Endothelial cell of umbilical vein (primary cell): ENCODE measurements at regions of chr6 and their contacts with region 1.

Region 1: GRCh38 chr6:161273752-161274487 is at the start of gene AGPAT4:
- DNase-seq: peak; percentile 98
- H3K4me3 ChIP-seq: peak within 1 kb of the TSS; percentile 71 to 82 (median 72)
- H3K27ac ChIP-seq: peak within 1 kb of the TSS; percentile 87
- H3K4me1 ChIP-seq: peaks cover 16% of the 10 kb centered on the region
- H3K27me3 ChIP-seq: no peaks in the 10 kb centered on the region
- CTCF ChIP-seq: no peak
- POLR2A ChIP-seq: peak; percentile 63
- total RNA-seq, gene AGPAT4: 15.2 and 15.4 TPM in 2 replicates

Region 2: GRCh38 chr6:160679402-160679769 is 594.5 kb before region 1 on chr6:
- CTCF ChIA-PET with region 1: no interaction called
- POLR2A ChIA-PET with region 1: no interaction called
- dilution Hi-C with region 1: no loop called
- intact Hi-C with region 1: no loop called
- DNase-seq: no peak
- H3K4me3 ChIP-seq: no peak overlapping the region
- H3K27ac ChIP-seq: no peak overlapping the region
- H3K4me1 ChIP-seq: no peaks in the 10 kb centered on the region
- H3K27me3 ChIP-seq: no peaks in the 10 kb centered on the region
- CTCF ChIP-seq: no peak
- POLR2A ChIP-seq: no peak

Region 3: GRCh38 chr6:160930547-160931377 is 343.2 kb before region 1 on chr6:
- CTCF ChIA-PET with region 1: interaction called, 3 read pairs
- POLR2A ChIA-PET with region 1: no interaction called
- dilution Hi-C with region 1: no loop called
- intact Hi-C with region 1: loop called (anchors 10 kb)
- DNase-seq: peak; percentile 59
- H3K4me3 ChIP-seq: peak overlapping the region; percentile 22 to 39 (median 31)
- H3K27ac ChIP-seq: no peak overlapping the region
- H3K4me1 ChIP-seq: peaks cover 2% of the 10 kb centered on the region
- H3K27me3 ChIP-seq: peaks cover 0 to 3% of the 10 kb centered on the region in 2 experiments
- CTCF ChIP-seq: peak; percentile 87 to 94
- POLR2A ChIP-seq: no peak

Region 4: DNA sequence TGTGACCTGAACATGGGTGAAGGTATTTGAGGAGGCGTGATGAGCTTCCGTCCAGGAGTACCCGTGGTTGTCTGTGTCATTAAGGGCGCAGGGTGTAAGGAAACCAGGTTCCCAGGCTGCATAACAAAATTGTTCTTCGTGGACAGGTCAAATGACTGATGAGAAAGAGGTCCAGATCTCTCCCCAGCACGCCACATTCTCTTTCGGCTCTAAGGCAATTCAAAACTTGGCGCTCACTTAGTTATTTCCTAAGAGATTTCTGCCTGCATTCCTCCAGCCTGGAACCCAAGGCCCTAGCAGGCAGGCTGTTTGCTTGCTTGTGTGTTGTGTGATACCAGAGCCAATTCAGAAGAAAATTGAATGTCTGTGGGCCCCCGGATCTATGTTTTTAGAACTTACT is 140.0 kb before region 1 on chr6:
- CTCF ChIA-PET with region 1: no interaction called
- POLR2A ChIA-PET with region 1: no interaction called
- dilution Hi-C with region 1: no loop called
- intact Hi-C with region 1: loop called (anchors 5 kb)
- DNase-seq: no peak
- H3K4me3 ChIP-seq: no peak overlapping the region
- H3K27ac ChIP-seq: no peak overlapping the region
- H3K4me1 ChIP-seq: no peaks in the 10 kb centered on the region
- H3K27me3 ChIP-seq: no peaks in the 10 kb centered on the region
- CTCF ChIP-seq: no peak
- POLR2A ChIP-seq: no peak

Region 5: DNA sequence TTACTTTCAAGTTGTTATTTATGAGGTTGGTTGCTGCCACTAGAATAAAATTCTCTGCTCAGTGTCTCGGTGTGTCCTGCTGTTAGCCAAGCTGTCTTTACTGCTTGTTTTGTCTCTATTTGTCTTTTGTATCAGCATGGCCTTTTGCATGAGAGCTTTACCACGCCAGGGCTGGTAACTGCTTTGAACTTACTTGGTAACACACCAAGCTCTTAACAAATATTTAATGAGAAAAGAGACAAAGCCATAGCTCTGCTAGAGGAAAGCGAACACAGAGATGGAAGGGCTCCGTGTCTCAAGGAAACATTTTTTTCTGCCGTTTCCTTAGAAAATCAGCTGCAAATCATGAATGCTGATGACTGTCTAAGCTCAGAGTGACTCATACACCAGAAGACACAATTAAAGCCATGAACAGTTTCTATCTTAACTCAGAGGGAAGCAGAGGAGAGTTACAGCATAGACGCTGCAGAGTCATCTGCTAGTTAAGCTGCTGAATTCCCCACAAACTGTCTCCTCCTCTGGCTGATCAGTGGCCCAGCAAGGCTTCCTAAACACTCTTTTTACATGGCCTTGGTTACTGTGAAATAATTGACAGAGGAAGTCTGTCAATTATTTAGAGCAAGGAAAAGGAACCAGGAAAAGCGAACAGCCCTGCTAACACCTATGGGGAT is 44.9 kb before region 1 on chr6:
- CTCF ChIA-PET with region 1: interaction called, 8 read pairs
- POLR2A ChIA-PET with region 1: interaction called, 3 read pairs
- dilution Hi-C with region 1: no loop called
- intact Hi-C with region 1: loop called (anchors 1 kb)
- DNase-seq: peak; percentile 87
- H3K4me3 ChIP-seq: peak overlapping the region in 1 of 3 experiments; percentile 14
- H3K27ac ChIP-seq: peak overlapping the region; percentile 62
- H3K4me1 ChIP-seq: peaks cover 26% of the 10 kb centered on the region
- H3K27me3 ChIP-seq: no peaks in the 10 kb centered on the region
- CTCF ChIP-seq: no peak
- POLR2A ChIP-seq: no peak

Region 6: GRCh38 chr6:161301338-161301737 is 27.4 kb after region 1 on chr6:
- CTCF ChIA-PET with region 1: no interaction called
- POLR2A ChIA-PET with region 1: no interaction called
- dilution Hi-C with region 1: no loop called
- intact Hi-C with region 1: loop called (anchors 2 kb)
- DNase-seq: no peak
- H3K4me3 ChIP-seq: no peak overlapping the region
- H3K27ac ChIP-seq: no peak overlapping the region
- H3K4me1 ChIP-seq: no peaks in the 10 kb centered on the region
- H3K27me3 ChIP-seq: no peaks in the 10 kb centered on the region
- CTCF ChIP-seq: no peak
- POLR2A ChIP-seq: no peak

Region 7: DNA sequence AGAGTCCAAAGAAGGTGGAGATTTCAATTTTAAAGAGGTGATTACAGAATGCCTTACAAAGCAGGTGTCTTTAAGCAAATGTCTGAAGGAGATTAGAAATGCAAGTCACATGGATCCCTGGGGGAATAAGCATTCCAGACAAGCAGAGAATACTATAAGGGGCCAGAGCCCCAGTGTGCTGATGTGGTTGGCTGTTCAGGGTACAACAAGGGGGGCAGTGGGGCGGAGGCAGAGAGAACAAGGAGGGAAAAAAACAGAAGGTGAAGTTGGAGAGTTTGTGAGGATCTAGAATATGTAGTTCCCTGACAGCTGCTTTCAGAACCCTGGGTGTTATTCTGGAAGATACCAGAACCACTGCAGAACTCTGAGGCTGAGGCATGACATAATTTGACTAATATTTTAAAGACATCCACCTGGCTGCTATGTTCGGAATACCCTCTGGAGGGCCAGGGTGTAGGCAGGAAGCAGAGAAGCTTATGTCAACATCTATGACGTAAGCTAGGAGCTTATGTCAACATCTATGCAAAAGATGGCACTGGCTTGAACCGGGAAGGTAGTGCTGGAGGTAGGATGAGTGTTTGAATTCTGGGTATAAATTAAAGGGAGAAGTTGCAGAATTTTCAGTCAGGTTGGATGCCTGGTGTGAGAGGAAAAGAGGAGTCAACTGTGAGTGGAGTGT is 276.2 kb after region 1 on chr6:
- CTCF ChIA-PET with region 1: no interaction called
- POLR2A ChIA-PET with region 1: no interaction called
- dilution Hi-C with region 1: no loop called
- intact Hi-C with region 1: no loop called
- DNase-seq: no peak
- H3K4me3 ChIP-seq: no peak overlapping the region
- H3K27ac ChIP-seq: no peak overlapping the region
- H3K4me1 ChIP-seq: no peaks in the 10 kb centered on the region
- H3K27me3 ChIP-seq: no peaks in the 10 kb centered on the region
- CTCF ChIP-seq: no peak
- POLR2A ChIP-seq: no peak